Aorta (tissue), 5 donors: ENCODE measurements at regions of chr15 and their contacts with region 1.

Region 1: DNA sequence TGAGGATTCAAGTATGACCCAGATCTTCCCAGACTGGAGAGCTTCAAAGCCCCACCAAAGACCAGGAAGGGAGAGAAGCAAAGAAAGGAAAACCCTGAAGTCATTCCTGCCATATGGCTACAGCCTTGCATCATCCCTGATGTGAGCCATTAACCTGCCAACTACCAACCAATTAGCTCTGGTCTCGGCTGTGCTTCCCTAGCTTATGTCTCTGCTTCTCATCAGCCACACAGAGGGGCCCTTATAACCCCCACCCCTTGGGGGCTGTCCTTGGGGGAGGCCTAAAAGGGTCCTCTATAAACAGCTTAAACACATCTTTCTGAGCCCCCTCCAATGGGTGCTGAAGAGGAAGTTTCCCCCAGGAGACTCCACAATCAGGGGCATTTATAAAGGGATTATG is 52.8 kb downstream of the NOX5 start:
- DNase-seq: no peak
- ATAC-seq: no peak
- H3K4me3 ChIP-seq: no peak overlapping the region
- H3K27ac ChIP-seq: no peak overlapping the region
- H3K4me1 ChIP-seq: no peaks in the 10 kb centered on the region
- H3K27me3 ChIP-seq: no peaks in the 10 kb centered on the region

Region 2: GRCh38 chr15:68962465-68962864 is 104.8 kb before region 1 on chr15:
- intact Hi-C with region 1: no loop called
- DNase-seq: no peak
- ATAC-seq: no peak
- H3K4me3 ChIP-seq: no peak overlapping the region
- H3K27ac ChIP-seq: no peak overlapping the region
- H3K4me1 ChIP-seq: no peaks in the 10 kb centered on the region
- H3K27me3 ChIP-seq: no peaks in the 10 kb centered on the region

Region 3: DNA sequence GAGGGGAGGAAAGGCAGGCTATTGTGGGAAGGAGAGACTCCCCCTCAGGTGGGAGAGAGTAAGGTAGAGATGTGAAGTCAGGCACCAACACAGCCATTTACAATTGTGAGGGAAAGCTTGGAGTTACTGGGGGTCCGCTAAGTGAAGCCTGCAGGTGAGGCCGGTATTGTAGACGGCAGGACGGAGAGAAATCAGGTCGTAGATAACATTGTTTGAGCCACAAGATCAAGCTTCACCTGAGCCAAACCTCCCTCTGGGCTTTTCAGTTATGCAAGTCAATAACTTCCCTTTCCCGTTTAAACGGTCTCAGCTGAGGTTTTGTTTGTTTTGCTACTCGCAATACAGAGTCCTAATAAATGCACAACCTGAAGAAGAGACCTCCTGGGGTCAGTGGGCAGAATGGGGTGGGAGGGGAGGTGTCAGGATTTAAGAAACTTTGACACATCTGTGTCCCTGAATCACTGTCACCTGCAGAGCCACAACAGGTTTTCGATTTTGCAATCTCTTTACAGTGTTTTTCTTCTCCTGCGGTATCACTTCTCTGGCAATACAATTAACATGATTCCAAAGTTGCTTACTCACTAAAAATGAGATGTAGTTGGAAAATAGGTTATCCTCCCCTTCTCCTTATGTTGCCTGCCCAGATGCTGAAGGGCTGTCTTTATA is 21.1 kb after region 1 on chr15:
- intact Hi-C with region 1: loop called in 1 of 2 experiments (anchors 1 kb)
- DNase-seq: no peak
- ATAC-seq: no peak
- H3K4me3 ChIP-seq: no peak overlapping the region
- H3K27ac ChIP-seq: no peak overlapping the region
- H3K4me1 ChIP-seq: no peaks in the 10 kb centered on the region
- H3K27me3 ChIP-seq: no peaks in the 10 kb centered on the region